Prostate gland (tissue), 2 donors: ENCODE measurements at regions of chr10 and their contacts with region 1.

Region 1: DNA sequence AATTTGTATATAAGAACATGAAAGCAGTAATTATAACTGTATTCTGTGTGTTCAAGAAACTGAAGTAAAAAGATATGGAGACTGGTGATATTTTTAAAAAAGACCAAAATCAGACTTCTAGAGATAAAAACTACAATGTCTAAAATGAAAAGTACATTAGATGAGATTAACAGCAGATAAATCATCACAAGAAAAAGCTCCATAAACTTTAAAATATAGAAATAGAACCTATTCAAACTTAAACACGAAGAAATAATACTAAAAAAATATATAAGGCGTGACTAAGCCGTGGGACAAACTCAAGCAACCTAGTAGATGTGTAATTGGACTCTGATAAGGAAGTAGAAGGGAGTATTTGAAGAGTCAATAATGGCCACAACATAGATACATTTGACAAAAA is 189.1 kb upstream of the ZMIZ1 start:
- DNase-seq: no peak
- H3K4me3 ChIP-seq: no peak overlapping the region
- H3K27ac ChIP-seq: no peak overlapping the region
- H3K4me1 ChIP-seq: no peaks in the 10 kb centered on the region
- H3K27me3 ChIP-seq: no peaks in the 10 kb centered on the region
- CTCF ChIP-seq: no peak
- POLR2A ChIP-seq: no peak

Region 2: DNA sequence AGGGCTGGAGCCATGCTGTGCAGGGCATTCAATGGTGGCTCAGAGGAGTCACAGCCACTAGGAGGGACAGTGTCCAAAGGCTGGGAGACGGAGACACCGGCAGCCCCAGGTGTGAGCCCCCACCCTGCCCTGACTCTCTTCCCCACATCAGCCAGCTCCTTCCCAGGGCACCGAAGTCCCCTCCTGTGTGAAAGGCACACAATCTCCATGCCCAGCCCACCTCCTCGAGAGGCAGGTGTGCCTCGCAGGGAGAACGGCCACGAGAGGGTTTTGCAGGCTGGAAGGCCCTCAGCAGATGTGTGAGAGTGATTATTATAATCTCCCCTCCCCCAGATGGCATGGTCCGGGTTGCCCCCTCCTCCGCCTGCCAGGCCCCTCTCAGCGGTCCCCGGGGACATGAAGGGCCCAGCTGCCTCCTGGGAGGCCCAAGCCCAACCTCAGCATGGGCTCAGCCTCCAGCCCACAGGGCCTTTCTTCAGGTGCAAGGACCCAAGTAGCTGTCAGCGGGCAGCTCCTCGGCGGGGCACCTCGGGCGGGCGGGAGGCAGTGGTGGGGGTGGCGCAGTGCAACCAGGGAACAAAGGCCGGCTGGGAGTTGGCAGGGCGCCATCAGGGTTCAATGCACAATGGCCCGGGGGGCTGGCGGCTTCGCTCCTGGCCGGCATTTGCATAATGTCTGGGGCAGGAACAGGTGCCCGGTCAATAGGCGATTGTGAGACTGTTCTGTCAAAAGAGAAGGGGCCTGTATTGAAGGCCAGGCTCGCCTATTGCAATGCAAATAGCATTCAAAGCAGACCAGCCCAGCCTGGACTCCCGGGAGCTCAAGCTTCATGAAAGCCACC is 33.8 kb after region 1 on chr10:
- intact Hi-C with region 1: loop called (anchors 5 kb)
- DNase-seq: peak; percentile 11
- H3K4me3 ChIP-seq: no peak overlapping the region
- H3K27ac ChIP-seq: no peak overlapping the region
- H3K4me1 ChIP-seq: no peaks in the 10 kb centered on the region
- H3K27me3 ChIP-seq: no peaks in the 10 kb centered on the region
- CTCF ChIP-seq: no peak
- POLR2A ChIP-seq: no peak